HCT116 (cell line): ENCODE measurements at regions of chr9 and their contacts with region 1.

Region 1: DNA sequence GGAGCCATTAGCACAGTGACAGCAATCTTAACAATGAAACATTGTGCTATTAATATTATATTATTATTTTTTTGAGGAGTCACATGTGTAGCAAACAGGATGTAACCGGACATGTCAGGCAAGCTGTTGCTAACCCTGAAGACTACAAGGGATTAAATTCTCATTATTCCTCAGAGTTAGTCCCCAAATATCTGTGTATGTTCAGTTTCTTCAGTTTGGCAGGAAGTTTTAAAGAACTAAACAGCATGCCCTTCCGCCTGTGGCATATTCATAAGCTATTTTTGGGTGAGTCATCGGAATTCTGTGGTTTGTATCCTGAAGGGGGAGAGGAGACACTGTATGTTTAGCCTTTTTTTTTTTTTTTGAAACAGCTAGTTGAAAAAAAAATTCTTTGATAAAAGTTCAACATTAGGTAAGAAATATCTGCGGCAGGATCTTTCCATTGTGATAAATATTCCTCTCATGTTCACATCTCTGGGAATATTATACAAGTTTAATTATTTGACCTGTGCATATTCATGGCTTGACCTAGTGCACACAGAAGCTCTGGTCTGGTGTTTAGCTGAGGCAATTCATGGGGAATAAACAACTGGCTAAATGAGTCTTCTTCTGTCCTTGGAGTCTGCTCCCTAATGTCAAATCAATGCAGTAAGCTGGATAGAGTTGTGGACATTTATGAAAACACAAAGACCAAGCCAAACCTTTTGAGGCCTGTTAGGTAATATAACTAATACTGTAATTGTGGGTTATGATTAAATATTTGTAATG is 202.7 kb upstream of the CDKN2B start:
- DNase-seq: peak; percentile 79
- ATAC-seq: peak; percentile 86
- H3K4me3 ChIP-seq: peak overlapping the region in 1 of 2 experiments; percentile 14; a peak in 1 of 4 replicates
- H3K27ac ChIP-seq: peak overlapping the region; percentile 52
- H3K4me1 ChIP-seq: peaks cover 56 to 57% of the 10 kb centered on the region in 2 experiments
- H3K27me3 ChIP-seq: no peaks in the 10 kb centered on the region
- CTCF ChIP-seq: no peak
- POLR2A ChIP-seq: no peak
- RAD21 ChIP-seq: peak; percentile 15

Region 2: DNA sequence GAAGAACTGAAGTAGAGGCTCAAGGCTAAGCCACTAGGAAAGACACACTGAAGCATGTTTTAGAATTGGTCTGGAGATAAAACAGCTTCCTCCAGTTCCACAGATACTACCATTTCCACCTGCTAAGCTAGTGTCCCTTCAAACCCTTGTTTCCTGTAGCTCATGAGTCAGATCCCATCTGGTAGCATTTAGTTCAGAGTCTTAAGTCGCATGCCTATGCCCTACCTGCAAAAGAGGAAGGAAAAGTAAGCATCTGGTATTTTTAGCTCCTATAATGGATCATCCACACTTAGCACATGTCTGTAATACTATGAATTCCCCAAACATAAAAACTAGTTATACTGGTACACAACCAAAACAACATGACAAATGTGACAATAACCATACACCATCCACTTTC is 309.6 kb before region 1 on chr9:
- CTCF ChIA-PET with region 1: no interaction called
- POLR2A ChIA-PET with region 1: no interaction called
- RAD21 ChIA-PET with region 1: no interaction called
- intact Hi-C with region 1: loop called (anchors 10 kb)
- DNase-seq: no peak
- ATAC-seq: no peak
- H3K4me3 ChIP-seq: no peak overlapping the region
- H3K27ac ChIP-seq: no peak overlapping the region
- H3K4me1 ChIP-seq: no peaks in the 10 kb centered on the region
- H3K27me3 ChIP-seq: no peaks in the 10 kb centered on the region
- CTCF ChIP-seq: no peak
- POLR2A ChIP-seq: no peak
- RAD21 ChIP-seq: no peak

Region 3: GRCh38 chr9:22079873-22080341 is 131.9 kb before region 1 on chr9:
- CTCF ChIA-PET with region 1: no interaction called
- POLR2A ChIA-PET with region 1: no interaction called
- RAD21 ChIA-PET with region 1: no interaction called
- intact Hi-C with region 1: loop called (anchors 10 kb)
- DNase-seq: no peak
- ATAC-seq: no peak
- H3K4me3 ChIP-seq: no peak overlapping the region
- H3K27ac ChIP-seq: no peak overlapping the region
- H3K4me1 ChIP-seq: peaks cover 7 to 13% of the 10 kb centered on the region in 2 experiments
- H3K27me3 ChIP-seq: no peaks in the 10 kb centered on the region
- CTCF ChIP-seq: no peak
- POLR2A ChIP-seq: no peak
- RAD21 ChIP-seq: no peak

Region 4: GRCh38 chr9:22119537-22120158 is 92.1 kb before region 1 on chr9:
- CTCF ChIA-PET with region 1: interaction called, 3 read pairs
- POLR2A ChIA-PET with region 1: no interaction called
- RAD21 ChIA-PET with region 1: no interaction called
- intact Hi-C with region 1: loop called (anchors 5 kb)
- DNase-seq: no peak
- ATAC-seq: peak; percentile 87
- H3K4me3 ChIP-seq: no peak overlapping the region
- H3K27ac ChIP-seq: no peak overlapping the region
- H3K4me1 ChIP-seq: peaks cover 2 to 10% of the 10 kb centered on the region in 2 experiments; a peak in 1 of 4 replicates
- H3K27me3 ChIP-seq: no peaks in the 10 kb centered on the region
- CTCF ChIP-seq: peak; percentile 61 to 68 (median 65)
- POLR2A ChIP-seq: no peak
- RAD21 ChIP-seq: peak; percentile 87

Region 5: DNA sequence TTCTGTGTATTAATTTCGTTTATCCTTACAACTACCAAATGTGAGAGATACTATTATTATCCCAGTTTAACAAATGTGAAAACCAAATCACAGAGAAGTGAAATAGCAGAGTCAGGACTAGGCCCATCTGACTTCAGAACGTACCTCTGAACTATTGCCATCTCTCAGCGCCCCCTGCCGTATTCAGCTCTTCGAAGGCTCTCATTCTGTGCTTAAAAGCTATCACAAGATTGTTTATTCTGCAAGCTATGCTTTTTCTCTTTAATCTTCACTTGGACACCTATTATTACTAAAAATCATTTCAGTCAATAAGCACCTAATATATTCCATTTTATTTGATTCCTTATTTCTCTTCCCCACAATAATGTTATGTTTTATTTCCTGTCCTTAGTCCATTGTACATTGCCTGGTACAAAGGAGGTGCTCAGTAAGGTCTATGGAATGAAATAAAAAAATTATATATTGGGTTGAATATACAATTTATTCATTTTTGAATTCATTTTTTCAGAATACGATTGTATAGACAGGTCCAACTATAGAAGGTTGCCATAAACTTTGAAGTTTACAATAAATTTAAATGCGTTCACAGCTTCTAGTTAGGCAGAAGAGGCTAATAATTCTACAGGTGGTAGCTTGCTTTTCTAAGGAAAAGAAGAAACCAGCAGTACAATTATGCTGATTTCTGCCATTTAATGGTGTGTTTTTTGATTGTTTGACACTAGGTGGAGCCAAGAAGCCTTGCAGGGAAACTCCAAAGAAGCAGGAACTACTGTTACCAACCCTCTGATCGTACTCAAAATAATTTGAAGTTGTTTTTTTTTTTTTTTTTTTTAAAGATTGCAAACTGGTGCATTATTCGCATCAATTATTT is 32.6 kb after region 1 on chr9:
- CTCF ChIA-PET with region 1: interaction called, 13 read pairs
- POLR2A ChIA-PET with region 1: no interaction called
- RAD21 ChIA-PET with region 1: no interaction called
- intact Hi-C with region 1: no loop called
- DNase-seq: peak; percentile 40
- ATAC-seq: peak; percentile 89
- H3K4me3 ChIP-seq: no peak overlapping the region
- H3K27ac ChIP-seq: no peak overlapping the region
- H3K4me1 ChIP-seq: peaks cover 8% of the 10 kb centered on the region in 2 experiments; a peak in 3 of 4 replicates
- H3K27me3 ChIP-seq: peaks cover 3% of the 10 kb centered on the region; the same call in 1 of the 2 replicates
- CTCF ChIP-seq: peak; percentile 53 to 63 (median 57); a peak in 5 of 6 replicates
- POLR2A ChIP-seq: no peak
- RAD21 ChIP-seq: peak; percentile 68